GM10248 (cell line): ENCODE measurements at regions of chr1 and their contacts with region 1.

Region 1: DNA sequence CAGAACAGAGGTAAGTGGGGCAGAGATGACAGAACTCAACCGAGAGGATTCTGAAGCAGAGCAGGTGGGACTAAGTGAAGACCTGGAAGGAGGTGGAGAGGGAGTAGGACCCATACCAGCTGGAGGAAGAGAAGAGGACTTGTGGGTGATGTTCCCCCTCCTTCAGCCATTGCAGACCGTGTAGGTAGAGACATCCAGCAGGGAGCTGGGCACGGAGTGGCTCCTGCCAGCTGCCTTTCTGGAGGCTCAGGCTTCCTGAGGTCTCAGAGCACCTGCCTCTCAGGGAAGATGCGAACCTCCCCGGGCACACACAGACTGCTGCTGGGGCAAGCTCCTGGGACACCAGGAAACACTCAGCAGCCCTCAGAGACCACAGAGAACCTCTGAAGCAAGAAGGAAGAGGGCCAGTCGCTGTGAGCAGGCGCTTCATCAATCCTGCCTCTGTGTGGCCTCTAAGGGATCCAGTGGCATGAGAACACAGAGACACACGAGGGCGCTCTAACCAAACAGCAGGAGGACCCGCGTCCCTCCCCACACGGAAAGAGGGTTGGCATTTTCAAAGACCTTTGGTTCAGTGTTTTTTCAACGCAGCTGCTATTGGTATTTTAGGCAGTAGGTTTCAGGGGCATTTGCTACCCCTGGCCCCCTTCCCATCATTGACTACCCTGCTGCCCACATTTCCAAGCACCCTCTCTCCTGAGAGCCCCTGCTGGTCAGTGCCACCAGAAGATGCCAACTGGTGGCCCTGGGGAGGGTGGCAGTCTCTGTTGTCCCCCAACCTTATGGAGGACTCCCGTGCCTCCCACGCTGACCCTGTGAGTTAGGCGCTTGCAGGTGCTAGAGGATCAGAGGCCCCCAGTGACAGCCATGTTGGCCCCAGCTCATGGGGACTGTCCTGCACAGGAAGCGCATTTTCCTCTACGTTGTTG is 89.6 kb upstream of the EDN2 start:
- DNase-seq: peak; percentile 88
- CTCF ChIP-seq: peak; percentile 88

Region 2: GRCh38 chr1:41560496-41560895 is 13.6 kb before region 1 on chr1:
- CTCF ChIA-PET with region 1: interaction called, 12 read pairs
- POLR2A ChIA-PET with region 1: no interaction called
- DNase-seq: no peak
- CTCF ChIP-seq: no peak

Region 3: GRCh38 chr1:41589395-41589794 is 15.3 kb after region 1 on chr1:
- CTCF ChIA-PET with region 1: interaction called, 21 read pairs
- POLR2A ChIA-PET with region 1: no interaction called
- DNase-seq: no peak
- CTCF ChIP-seq: no peak

Region 4: GRCh38 chr1:41662765-41663437 is 88.9 kb after region 1 on chr1:
- CTCF ChIA-PET with region 1: interaction called, 10 read pairs
- POLR2A ChIA-PET with region 1: no interaction called
- DNase-seq: no peak
- CTCF ChIP-seq: no peak

Region 5: GRCh38 chr1:41862384-41863174 is 288.5 kb after region 1 on chr1:
- CTCF ChIA-PET with region 1: interaction called, 21 read pairs
- POLR2A ChIA-PET with region 1: no interaction called
- DNase-seq: no peak
- CTCF ChIP-seq: no peak

Region 6: DNA sequence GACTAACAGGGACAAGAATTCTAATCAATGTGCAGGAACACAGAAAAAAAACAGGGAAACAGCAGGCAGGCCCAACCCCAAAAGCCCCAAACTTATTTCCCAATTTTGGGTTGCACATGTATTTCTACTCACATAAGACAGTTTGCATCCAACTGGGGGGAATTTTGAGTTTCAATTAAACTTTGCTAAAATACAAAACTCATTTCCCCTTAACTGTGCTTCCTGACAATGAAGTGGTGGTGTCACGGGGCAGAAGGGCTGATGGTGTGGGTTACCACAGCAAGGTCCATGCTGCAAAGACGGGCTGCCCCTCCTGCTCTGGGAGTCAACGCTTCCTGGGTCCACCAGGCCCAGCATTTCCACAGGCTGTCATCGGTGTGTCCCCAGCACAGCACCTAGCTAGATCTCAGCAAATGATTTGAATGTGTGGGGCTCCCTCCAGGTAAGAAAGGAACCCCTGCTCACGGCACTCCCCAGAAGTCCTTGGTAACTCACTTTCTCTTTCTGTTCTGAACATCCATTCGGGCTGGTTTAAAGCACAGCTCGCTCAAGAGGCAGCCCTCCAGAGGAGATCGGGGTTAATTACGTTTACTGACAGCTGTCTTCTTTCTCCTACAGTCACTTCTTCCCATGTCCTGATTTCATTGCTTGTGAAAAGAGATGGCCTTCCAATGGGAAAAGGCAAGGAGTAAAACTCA is 317.3 kb after region 1 on chr1:
- CTCF ChIA-PET with region 1: interaction called, 15 read pairs
- POLR2A ChIA-PET with region 1: no interaction called
- DNase-seq: peak; percentile 80
- CTCF ChIP-seq: peak; percentile 17